H1 (cell line): ENCODE measurements at regions of chr1 and their contacts with region 1.

Region 1: DNA sequence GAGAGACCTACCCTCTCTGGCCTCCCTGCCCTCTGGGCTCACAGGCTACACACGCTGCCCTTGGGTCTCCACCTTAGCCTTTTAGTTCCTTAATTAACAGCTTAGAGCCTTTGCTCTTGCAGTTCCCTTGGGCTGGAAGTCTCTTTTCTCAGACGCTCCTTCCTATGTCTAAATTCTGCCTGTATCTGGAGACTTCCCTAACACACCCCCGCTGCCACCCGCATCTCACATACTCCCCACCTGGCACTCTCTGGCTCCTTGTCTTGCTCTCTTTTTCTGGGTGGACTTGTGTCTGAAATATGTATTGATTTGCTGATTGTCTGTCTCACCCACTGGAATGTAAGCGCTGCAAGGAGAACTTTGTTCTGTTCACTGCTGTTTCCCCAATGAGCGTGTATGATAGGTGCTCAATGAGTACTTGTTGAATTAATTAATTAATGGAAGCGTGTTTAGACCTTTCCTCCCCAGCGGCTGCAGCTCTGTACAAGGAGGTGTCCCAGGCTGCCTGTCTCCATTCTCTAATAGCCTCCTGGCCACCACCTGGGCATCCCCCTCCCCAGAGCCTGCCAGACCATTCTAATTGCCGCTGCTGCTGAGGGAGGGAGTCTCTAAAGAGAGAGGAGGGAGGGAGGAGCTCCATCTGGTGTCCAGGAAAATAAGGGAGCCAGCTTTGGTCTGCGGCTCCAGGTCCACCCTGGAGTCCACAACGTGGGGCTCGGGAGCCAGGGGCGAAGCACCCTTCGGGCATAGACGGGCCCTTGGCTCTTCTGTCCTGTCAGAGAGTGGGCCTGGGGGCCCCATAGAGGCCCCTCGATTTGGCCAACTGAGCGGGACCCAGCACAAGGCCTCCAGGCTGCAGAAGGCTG is 95.4 kb downstream of the RNF220 start:
- DNase-seq: peak in 1 of 2 experiments; percentile 80
- H3K4me3 ChIP-seq: peak overlapping the region; percentile 17 to 53 (median 40); a peak in 6 of 8 replicates
- H3K27ac ChIP-seq: no peak overlapping the region
- H3K4me1 ChIP-seq: peaks cover 11 to 29% (median 24%) of the 10 kb centered on the region in 4 experiments
- H3K27me3 ChIP-seq: peaks cover 0 to 6% (median 0%) of the 10 kb centered on the region in 4 experiments; a peak in 4 of 7 replicates
- CTCF ChIP-seq: peak; percentile 41 to 45 (median 43)
- EP300 ChIP-seq: no peak
- POLR2A ChIP-seq: no peak
- RAD21 ChIP-seq: peak; percentile 59 to 69

Region 2: GRCh38 chr1:44485229-44485933 is 15.0 kb before region 1 on chr1:
- CTCF ChIA-PET with region 1: interaction called, 12 read pairs
- POLR2A ChIA-PET with region 1: interaction called, 7 read pairs
- DNase-seq: no peak
- H3K4me3 ChIP-seq: no peak overlapping the region
- H3K27ac ChIP-seq: no peak overlapping the region
- H3K4me1 ChIP-seq: peaks cover 6 to 17% (median 11%) of the 10 kb centered on the region in 4 experiments; a peak in 6 of 7 replicates
- H3K27me3 ChIP-seq: no peaks in the 10 kb centered on the region
- CTCF ChIP-seq: no peak
- EP300 ChIP-seq: no peak
- POLR2A ChIP-seq: no peak
- RAD21 ChIP-seq: no peak

Region 3: DNA sequence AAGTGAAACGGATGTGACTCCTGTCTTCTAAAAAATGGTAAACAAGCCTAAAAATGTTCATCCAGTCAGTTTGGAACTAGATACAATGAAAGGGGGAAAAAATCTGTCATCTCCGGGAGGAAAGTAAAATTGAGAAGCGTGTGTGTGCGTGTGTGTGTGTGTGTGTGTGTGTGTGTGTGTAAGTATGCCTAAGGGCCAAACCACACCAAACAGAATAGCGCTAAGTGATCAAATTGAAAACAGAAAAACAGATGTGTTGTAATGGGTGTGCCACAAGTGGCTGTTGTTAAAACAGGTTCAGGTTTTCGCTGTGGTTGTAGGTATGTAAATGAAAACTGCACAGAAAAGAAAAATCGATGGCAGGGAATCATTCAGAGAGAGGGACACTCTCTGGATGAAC is 11.4 kb after region 1 on chr1:
- CTCF ChIA-PET with region 1: interaction called, 6 read pairs
- POLR2A ChIA-PET with region 1: interaction called, 33 read pairs
- DNase-seq: no peak
- H3K4me3 ChIP-seq: no peak overlapping the region
- H3K27ac ChIP-seq: no peak overlapping the region
- H3K4me1 ChIP-seq: peaks cover 14 to 29% (median 22%) of the 10 kb centered on the region in 4 experiments
- H3K27me3 ChIP-seq: peaks cover 0 to 8% (median 3%) of the 10 kb centered on the region in 4 experiments; a peak in 4 of 7 replicates
- CTCF ChIP-seq: no peak
- EP300 ChIP-seq: no peak
- POLR2A ChIP-seq: no peak
- RAD21 ChIP-seq: no peak

Region 4: DNA sequence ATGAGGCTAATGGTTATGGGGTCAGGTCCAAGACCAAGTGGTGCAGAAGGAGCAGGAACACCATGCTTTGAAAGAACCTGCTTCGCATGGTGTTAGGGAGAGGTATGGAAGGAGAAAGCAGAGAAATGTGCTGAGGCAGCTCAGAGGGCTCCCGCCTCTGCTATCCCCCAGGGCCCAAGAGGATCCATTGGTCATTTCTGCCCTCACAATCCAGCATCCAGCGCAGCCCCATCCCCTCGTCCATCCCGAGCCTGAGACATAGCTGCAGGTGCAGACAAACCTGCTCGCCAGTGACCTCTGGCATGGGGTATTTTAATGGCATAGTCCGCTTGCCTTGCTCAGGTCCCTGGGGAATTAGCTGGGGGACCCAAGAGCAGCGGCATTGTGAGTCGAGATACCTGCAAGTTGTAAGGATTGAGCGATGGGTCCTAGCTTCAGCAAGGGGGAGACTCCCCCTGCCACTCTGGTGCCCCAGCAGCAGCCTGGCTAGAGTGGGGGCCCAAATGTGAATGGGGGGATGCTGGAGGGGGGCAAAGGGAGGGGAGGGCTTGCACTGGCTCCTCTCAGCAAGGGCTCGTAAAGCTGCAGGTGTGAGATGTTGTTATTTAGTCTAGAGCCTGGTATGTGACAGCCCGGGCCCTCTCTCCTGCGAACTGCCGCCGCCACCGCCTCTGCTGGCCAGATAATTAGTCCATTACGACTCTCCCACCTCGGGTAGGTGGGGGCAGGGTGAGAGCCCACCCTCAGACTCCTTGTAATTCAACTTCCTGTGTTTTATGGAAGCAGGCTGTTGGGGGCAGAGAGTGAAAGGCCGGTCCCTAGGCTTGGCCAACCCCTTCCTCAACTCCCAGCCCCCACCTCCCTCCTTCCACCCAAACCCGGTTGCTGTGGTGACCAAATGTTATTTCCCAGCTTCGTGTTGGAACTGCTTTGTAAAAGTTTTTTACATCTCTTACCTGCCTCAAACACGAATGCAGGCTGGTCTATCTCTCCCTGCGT is 23.5 kb after region 1 on chr1:
- CTCF ChIA-PET with region 1: interaction called, 24 read pairs
- POLR2A ChIA-PET with region 1: interaction called, 21 read pairs
- DNase-seq: peak; percentile 70 to 80
- H3K4me3 ChIP-seq: peak overlapping the region; percentile 37 to 59 (median 50); a peak in 7 of 8 replicates
- H3K27ac ChIP-seq: peak overlapping the region; percentile 39
- H3K4me1 ChIP-seq: peaks cover 19 to 34% (median 23%) of the 10 kb centered on the region in 4 experiments
- H3K27me3 ChIP-seq: no peaks in the 10 kb centered on the region
- CTCF ChIP-seq: peak; percentile 11 to 28 (median 22); a peak in 2 of 4 replicates
- EP300 ChIP-seq: no peak
- POLR2A ChIP-seq: peak in 1 of 2 experiments; percentile 64; a peak in 2 of 3 replicates
- RAD21 ChIP-seq: peak; percentile 29 to 42

Region 5: DNA sequence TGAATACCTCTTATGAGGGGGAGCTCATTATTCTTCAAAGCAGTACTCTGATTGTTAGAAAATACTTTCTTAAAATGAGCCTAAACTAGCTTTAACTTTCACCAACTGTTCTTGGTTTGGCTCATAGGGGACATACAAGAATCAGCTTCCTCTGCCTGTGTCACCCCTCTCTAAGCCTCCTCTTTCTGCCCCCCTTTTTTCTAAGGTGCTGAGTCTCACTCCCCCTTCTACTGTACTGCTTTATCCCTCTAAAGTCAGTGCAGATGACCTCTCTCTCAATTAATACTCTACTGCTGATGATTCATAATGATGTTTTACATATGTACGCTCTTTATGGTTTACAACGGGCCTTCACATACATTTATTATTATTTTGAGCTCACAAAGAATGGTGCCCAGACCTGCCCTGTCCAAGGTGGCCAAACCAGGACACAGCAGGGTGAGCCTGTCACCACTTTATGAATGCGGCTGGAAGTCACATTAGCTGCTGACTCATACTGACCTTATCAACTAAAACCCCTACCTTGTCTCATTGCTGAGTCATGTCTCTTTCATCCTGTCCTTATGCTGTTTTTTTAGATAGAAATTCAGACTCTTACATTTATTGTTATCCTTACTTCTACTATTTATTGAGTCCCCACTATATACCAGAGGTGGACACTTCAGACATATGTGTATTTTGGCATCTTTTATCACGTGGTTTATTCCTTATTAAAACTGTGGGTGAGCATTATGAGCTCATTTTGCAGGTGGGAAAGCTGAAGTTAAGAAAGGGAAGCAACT is 31.6 kb after region 1 on chr1:
- CTCF ChIA-PET with region 1: interaction called, 11 read pairs
- POLR2A ChIA-PET with region 1: interaction called, 5 read pairs
- DNase-seq: no peak
- H3K4me3 ChIP-seq: no peak overlapping the region
- H3K27ac ChIP-seq: no peak overlapping the region
- H3K4me1 ChIP-seq: peaks cover 15 to 26% (median 23%) of the 10 kb centered on the region in 4 experiments
- H3K27me3 ChIP-seq: no peaks in the 10 kb centered on the region
- CTCF ChIP-seq: no peak
- EP300 ChIP-seq: no peak
- POLR2A ChIP-seq: no peak
- RAD21 ChIP-seq: no peak